Vagina (tissue), 2 donors: ENCODE measurements at regions of chr1 and their contacts with region 1.

Region 1: DNA sequence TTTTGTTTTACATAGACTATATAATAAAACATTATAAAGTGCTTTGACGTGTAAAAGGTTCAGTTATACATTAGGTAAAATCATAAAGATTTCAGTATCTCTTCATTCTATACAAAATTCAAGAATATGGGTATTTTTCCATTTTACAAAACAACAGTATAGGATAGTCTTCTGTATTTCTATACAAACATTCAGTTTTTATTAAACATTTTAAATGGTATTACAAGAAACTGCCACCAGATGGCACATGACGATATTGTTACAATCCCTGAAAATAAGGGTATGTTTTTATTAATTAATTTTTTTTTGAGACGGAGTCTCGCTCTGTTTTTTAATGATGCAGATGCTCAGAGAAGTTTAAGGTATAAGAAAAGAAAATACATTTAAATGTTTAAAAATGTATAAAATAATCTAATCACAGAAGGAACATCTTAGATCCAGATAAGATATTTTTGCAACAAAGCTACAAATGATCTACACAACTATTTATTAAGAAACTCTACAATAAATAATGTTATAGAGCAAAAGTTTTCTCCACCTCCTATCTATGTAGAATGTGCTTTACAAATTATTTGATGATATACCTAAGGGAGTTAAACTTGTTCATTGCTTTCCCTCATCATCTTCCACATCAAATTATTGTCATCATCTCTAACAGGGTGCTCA is 23.5 kb upstream of the RSBN1 start:
- DNase-seq: no peak
- H3K4me3 ChIP-seq: no peak overlapping the region
- H3K27ac ChIP-seq: no peak overlapping the region
- H3K4me1 ChIP-seq: no peaks in the 10 kb centered on the region
- H3K27me3 ChIP-seq: no peaks in the 10 kb centered on the region
- CTCF ChIP-seq: peak; percentile 42 to 71 (median 44)
- POLR2A ChIP-seq: no peak

Region 2: DNA sequence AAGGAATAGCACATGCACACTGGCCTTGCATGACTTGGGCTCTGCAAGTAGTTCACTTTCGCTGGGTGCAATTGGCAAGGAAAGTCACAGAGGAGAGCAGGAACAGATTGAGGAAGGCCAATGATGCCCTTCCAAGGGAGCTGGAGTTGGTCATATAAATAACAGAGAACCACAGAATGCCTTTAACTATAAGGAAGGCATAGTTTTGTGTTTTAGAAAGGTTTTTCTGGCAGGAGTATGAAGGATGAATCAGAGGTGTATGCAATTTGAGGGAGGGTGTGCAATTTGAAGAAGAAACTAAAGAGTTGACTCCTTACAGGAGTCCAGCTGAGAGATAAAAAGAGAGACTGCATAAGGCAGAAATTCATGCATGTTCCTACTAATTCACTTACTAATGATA is 188.6 kb before region 1 on chr1:
- intact Hi-C with region 1: no loop called
- DNase-seq: no peak
- H3K4me3 ChIP-seq: no peak overlapping the region
- H3K27ac ChIP-seq: no peak overlapping the region
- H3K4me1 ChIP-seq: no peaks in the 10 kb centered on the region
- H3K27me3 ChIP-seq: no peaks in the 10 kb centered on the region
- CTCF ChIP-seq: no peak
- POLR2A ChIP-seq: no peak

Region 3: GRCh38 chr1:113742515-113742914 is 93.3 kb before region 1 on chr1:
- intact Hi-C with region 1: no loop called
- DNase-seq: no peak
- H3K4me3 ChIP-seq: no peak overlapping the region
- H3K27ac ChIP-seq: no peak overlapping the region
- H3K4me1 ChIP-seq: no peaks in the 10 kb centered on the region
- H3K27me3 ChIP-seq: no peaks in the 10 kb centered on the region
- CTCF ChIP-seq: no peak
- POLR2A ChIP-seq: no peak

Region 4: GRCh38 chr1:113904674-113905434 is 69.1 kb after region 1 on chr1 and contains the starts of genes AP4B1 and DCLRE1B:
- intact Hi-C with region 1: loop called (anchors 10 kb)
- DNase-seq: peak; percentile 99
- H3K4me3 ChIP-seq: peak within 1 kb of the TSS; percentile 67 to 86
- H3K27ac ChIP-seq: peak within 1 kb of the TSS; percentile 95
- H3K4me1 ChIP-seq: peaks cover 22% of the 10 kb centered on the region
- H3K27me3 ChIP-seq: no peaks in the 10 kb centered on the region
- CTCF ChIP-seq: peak; percentile 39 to 84 (median 82)
- POLR2A ChIP-seq: peak in 1 of 2 donors; percentile 50
- total RNA-seq, gene AP4B1: 6.9 TPM
- total RNA-seq, gene DCLRE1B: 5.2 TPM

Region 5: DNA sequence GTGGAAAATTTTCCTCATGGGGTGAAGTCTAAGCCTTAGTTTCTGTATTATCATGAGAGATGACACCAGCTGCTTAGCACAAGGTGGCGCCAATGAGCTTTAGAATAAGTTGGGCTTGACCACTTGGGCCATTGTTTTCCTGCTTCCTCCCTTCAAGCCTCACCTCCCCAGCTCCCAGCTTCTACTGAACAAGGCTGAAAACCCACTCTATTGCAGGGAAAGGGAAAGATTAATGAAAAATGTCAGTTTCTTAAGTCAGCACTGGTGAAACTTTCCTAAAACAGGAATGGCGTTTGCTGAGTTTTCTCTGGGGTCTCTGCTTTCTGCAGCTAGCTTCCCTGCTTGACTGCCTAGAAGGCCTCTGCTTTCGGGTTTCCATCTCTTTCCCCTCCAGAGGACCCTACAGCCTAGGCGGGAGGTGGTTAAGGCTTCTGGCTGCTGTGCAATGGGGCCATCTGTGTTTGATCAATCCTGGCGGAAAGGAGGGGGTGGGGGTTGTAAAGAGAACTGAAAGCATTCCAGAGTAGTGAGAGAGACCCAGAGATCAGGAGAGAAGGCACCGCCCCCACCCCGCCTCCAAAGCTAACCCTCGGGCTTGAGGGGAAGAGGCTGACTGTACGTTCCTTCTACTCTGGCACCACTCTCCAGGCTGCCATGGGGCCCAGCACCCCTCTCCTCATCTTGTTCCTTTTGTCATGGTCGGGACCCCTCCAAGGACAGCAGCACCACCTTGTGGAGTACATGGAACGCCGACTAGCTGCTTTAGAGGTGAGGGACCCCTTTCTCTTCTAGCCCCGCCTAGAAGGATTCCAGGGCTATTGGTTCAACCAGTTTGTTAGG is 143.3 kb after region 1 on chr1 and contains the start of gene OLFML3:
- intact Hi-C with region 1: loop called (anchors 10 kb)
- DNase-seq: peak in 1 of 2 donors; percentile 96
- H3K4me3 ChIP-seq: peak within 1 kb of the TSS; percentile 45 to 46
- H3K27ac ChIP-seq: peak within 1 kb of the TSS; percentile 90
- H3K4me1 ChIP-seq: peaks cover 79% of the 10 kb centered on the region
- H3K27me3 ChIP-seq: no peaks in the 10 kb centered on the region
- CTCF ChIP-seq: peak; percentile 54 to 76 (median 74)
- POLR2A ChIP-seq: peak in 1 of 2 donors; percentile 71
- total RNA-seq, gene OLFML3: 108 TPM

Region 6: GRCh38 chr1:114282751-114283403 is 447.1 kb after region 1 on chr1:
- intact Hi-C with region 1: loop called (anchors 5 kb)
- DNase-seq: no peak
- H3K4me3 ChIP-seq: no peak overlapping the region
- H3K27ac ChIP-seq: no peak overlapping the region
- H3K4me1 ChIP-seq: no peaks in the 10 kb centered on the region
- H3K27me3 ChIP-seq: no peaks in the 10 kb centered on the region
- CTCF ChIP-seq: peak; percentile 58 to 86 (median 80)
- POLR2A ChIP-seq: no peak